ENCODE measurements at regions of chr18 and their contacts with region 1.

Region 1: DNA sequence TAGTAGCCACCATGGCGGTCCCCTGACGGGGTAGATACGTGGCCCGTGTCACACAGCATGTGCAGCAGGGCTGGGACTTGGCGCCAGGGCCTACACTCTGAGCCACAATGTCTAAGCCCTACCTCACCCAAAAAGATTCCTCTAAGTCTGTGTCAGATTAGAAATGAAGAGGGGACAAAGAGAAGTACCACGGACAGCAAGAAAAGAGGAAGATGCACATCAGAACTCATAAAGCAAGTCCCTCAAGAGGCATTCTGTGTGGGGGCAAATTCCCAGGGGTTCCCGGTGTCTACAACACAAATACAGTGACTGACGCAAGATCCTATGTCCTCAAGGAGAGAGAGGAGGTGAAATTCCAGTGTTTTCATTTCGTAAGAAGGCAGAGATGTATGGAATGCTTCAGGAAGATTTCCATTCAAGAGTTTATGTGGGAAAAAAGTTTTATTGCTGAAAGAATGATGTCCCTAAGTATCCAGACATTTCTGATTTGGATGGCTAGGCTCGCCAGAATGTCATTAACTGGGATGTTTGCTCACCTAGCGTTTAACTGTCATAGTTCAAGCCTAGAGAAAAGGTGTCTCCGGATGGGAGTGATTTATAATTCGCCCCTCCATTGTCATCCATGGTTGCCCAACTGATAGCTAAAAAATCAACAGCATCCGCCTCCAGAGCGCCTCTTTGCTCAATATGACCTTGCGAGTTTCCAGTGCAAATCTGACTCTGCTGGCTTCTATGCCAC is 75.6 kb upstream of the CHMP1B start:
- DNase-seq: no peak
- ATAC-seq: no peak
- H3K4me3 Mint-ChIP-seq: no peak overlapping the region
- H3K27ac Mint-ChIP-seq: no peak overlapping the region
- H3K4me1 Mint-ChIP-seq: no peaks in the 10 kb centered on the region
- H3K27me3 Mint-ChIP-seq: peaks cover 11% of the 10 kb centered on the region

Region 2: DNA sequence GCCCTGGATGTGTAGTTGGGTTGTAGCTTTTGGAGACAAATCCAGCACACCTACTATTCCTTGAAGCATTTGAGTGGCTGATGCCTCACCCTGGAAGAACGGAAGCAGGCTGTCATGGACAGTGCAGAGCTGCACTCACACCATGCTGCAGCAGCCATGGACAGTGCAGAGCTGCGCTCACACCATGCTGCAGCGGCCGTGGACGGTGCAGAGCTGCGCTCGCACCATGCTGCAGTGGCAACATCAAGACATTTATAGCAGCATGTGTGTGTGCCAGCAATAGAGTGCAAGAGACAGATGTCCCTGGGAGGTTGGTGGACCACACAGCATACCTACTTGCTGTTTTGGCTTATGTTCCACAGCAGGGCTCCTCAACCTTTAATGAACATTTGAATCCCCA is 56.0 kb before region 1 on chr18:
- CTCF ChIA-PET with region 1: no interaction called
- POLR2A ChIA-PET with region 1: no interaction called
- intact Hi-C with region 1: loop called in 1 of 2 experiments (anchors 10 kb)
- DNase-seq: no peak
- ATAC-seq: no peak
- H3K4me3 Mint-ChIP-seq: no peak overlapping the region
- H3K27ac Mint-ChIP-seq: no peak overlapping the region
- H3K4me1 Mint-ChIP-seq: no peaks in the 10 kb centered on the region
- H3K27me3 Mint-ChIP-seq: peaks cover 5% of the 10 kb centered on the region

Region 3: GRCh38 chr18:11752116-11752911 is 23.3 kb before region 1 on chr18:
- CTCF ChIA-PET with region 1: no interaction called
- POLR2A ChIA-PET with region 1: no interaction called
- intact Hi-C with region 1: no loop called
- DNase-seq: peak; percentile 41
- ATAC-seq: peak; percentile 65
- H3K4me3 Mint-ChIP-seq: peak overlapping the region; percentile 63
- H3K27ac Mint-ChIP-seq: no peak overlapping the region
- H3K4me1 Mint-ChIP-seq: peaks cover 10% of the 10 kb centered on the region
- H3K27me3 Mint-ChIP-seq: peaks cover 44% of the 10 kb centered on the region

Measured in activated CD4-positive, alpha-beta T cell treated with anti-CD3 and anti-CD28 coated beads for 36 hours (primary cell).